ENCODE measurements at regions of chr3 and their contacts with region 1.

Region 1: GRCh38 chr3:117322866-117323265 is 613.3 kb downstream of the TUSC7 start:
- DNase-seq: no peak
- ATAC-seq: no peak

Region 2: GRCh38 chr3:117165601-117166051 is 157.2 kb before region 1 on chr3:
- intact Hi-C with region 1: no loop called
- DNase-seq: no peak
- ATAC-seq: no peak

Region 3: GRCh38 chr3:118801899-118802298 is 1479.0 kb after region 1 on chr3:
- intact Hi-C with region 1: loop called (anchors 5 kb)
- DNase-seq: no peak
- ATAC-seq: no peak